Panc1 (cell line): ENCODE measurements at regions of chr10 and their contacts with region 1.

Region 1: GRCh38 chr10:73339436-73339835 is 19.2 kb downstream of the CFAP70 start:
- DNase-seq: no peak
- ATAC-seq: peak; percentile 39; the same call in 1 of the 2 replicates
- H3K4me3 ChIP-seq: no peak overlapping the region
- H3K27ac ChIP-seq: no peak overlapping the region
- H3K4me1 ChIP-seq: no peaks in the 10 kb centered on the region
- H3K27me3 ChIP-seq: peaks cover 2% of the 10 kb centered on the region; the same call in 1 of the 2 replicates
- CTCF ChIP-seq: no peak

Region 2: DNA sequence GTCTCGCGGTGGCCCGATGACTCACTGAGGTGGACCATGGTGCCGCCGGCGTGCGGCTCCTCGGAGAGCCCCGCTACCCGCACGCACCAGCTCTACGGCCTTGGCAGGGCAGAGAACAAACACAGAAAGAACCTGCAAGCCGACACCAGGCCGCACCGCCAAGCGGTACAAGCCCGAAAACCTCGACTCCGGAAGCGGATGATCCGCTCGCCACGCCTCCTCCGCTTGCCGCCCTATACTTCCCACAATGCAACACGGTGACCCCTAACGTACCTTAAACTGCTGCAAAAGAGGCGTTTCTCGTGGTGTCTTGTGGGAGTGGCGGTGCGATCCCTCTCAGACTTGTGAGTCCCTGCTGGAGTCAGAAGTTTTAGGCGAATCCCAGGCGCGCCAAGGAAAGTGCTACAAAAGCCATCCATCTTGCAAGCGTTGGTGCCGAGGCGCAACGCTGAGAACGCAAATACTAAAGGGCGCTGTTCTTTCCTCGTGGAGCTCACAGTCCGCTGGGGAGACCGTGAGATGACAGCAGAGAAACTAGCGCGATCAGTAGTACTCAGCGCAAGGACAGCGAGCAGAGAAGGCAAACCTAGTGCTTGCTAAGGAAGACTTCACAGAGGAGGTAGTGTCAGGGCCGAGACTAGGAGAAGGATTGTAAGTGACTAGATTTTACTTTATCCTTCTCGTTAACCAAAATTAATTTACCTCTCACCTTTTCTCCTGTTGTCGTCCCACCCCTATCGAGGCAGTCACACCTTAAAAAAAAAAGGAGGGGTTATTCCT is 86.8 kb before region 1 on chr10 and contains the start of gene MRPS16:
- CTCF ChIA-PET with region 1: interaction called, 10 read pairs
- POLR2A ChIA-PET with region 1: interaction called, 6 read pairs
- in situ Hi-C with region 1: no loop called
- intact Hi-C with region 1: no loop called
- DNase-seq: peak; percentile 88
- ATAC-seq: peak; percentile 95
- H3K4me3 ChIP-seq: peak within 1 kb of the TSS; percentile 96 to 100
- H3K27ac ChIP-seq: peak within 1 kb of the TSS; percentile 99
- H3K4me1 ChIP-seq: peaks cover 31% of the 10 kb centered on the region
- H3K27me3 ChIP-seq: no peaks in the 10 kb centered on the region
- CTCF ChIP-seq: no peak
- total RNA-seq, gene MRPS16: 199 TPM

Region 3: DNA sequence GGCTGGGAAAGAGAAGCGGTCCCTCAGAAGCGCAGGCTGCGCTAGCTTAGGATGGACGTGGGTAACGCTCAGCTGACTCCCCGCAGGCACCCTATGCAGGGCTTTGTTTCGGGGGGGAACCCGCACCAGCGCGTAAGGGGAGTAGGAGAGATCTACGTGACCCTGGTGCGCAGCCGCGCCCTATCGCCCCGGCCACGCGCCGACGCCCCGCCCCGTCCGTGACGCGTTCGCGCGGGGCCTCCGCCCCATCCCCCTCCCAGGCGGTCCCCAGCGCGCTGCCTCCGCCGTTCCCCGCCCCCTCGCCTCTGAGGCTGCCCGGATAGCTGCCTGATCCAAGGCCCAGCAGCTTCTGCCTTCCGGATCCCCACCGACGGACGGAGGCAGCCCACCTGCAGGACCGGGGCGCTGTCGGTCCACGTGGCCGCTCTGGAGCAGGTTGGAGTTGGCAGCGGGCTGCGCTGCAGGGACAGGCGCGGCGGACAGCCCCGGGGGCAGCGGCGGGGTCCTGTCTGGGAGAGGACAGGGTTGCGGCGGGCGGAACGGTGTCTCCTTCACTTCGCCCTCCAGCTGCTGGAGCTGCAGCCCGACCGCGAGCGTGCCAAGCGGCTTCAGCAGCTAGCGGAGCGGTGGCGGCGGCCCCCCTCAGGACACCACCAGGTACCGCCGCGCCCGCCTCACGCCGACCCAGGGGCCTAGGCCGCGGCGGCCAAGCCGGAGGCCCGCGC is 1871.0 kb after region 1 on chr10 and contains the start of gene VDAC2:
- CTCF ChIA-PET with region 1: no interaction called
- POLR2A ChIA-PET with region 1: interaction called, 10 read pairs
- in situ Hi-C with region 1: no loop called
- intact Hi-C with region 1: no loop called
- DNase-seq: no peak
- ATAC-seq: peak; percentile 94
- H3K4me3 ChIP-seq: peak within 1 kb of the TSS; percentile 94
- H3K27ac ChIP-seq: peak within 1 kb of the TSS; percentile 99
- H3K4me1 ChIP-seq: peaks cover 14% of the 10 kb centered on the region; the same call in 1 of the 2 replicates
- H3K27me3 ChIP-seq: no peaks in the 10 kb centered on the region
- CTCF ChIP-seq: no peak
- total RNA-seq, gene VDAC2: 340 TPM